ENCODE measurements at regions of chr1 and their contacts with region 1.

Region 1: DNA sequence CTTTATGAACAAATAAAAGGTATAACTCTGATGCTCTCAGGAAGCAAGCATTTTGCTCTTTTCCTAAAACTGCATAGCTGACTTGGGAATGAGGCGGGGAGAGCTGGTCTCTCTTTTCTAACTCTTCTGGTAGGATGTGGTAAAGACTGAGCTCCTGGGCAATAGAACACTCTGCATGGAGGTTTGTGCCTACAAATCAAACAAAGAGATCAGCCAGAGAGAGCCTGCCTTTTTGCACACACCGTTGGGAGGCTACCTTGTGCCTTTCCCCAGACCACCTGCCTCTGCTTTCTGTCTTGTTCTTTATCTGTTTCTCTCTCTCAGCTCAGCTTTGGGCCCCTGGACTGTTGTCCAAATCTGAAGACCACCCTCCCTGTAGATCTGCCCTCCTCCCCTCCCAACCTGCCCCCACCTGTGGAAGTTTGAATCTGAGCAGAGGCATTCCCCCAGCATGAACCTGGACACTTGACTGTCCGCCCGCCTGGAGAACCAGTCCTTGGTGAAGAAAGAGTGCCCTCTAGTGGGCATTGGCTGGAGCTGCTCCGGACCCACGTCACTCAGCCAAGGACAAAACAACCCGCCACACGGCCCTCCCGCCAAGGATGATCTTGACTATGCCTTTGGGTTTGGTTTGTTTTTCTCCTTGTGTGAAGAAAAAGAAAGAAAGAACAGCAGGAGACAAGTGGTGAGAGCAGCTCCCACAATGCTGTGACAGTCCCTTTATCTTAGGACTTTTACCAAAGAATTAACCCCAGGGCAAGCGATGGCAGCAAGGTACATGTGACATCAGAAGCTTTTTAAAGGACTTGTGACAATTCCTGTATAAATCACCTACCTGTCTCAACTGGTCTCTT is 228.2 kb downstream of the PBX1 start:
- DNase-seq: no peak
- H3K4me3 ChIP-seq: no peak overlapping the region
- CTCF ChIP-seq: peak; percentile 95

Region 2: DNA sequence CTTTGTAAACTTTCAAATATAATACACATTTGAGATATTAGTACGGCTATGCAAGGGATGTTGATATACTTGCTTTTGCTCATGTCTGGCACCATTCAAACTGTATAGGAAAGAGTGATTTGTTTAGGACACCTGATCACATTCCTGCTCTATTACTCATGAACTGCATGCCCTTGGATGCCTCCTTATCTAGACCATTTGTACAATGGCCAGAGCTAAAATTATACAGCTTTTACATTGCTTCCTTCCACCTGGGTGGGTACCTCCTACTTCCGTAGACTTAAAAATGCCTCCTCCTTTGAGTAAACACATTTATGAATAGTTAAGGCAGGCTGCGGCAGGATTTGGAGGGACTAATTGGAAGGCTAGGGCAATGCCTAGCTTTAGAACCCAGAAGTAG is 313.7 kb before region 1 on chr1:
- CTCF ChIA-PET with region 1: no interaction called
- POLR2A ChIA-PET with region 1: no interaction called
- DNase-seq: no peak
- H3K4me3 ChIP-seq: no peak overlapping the region
- CTCF ChIP-seq: no peak

Region 3: DNA sequence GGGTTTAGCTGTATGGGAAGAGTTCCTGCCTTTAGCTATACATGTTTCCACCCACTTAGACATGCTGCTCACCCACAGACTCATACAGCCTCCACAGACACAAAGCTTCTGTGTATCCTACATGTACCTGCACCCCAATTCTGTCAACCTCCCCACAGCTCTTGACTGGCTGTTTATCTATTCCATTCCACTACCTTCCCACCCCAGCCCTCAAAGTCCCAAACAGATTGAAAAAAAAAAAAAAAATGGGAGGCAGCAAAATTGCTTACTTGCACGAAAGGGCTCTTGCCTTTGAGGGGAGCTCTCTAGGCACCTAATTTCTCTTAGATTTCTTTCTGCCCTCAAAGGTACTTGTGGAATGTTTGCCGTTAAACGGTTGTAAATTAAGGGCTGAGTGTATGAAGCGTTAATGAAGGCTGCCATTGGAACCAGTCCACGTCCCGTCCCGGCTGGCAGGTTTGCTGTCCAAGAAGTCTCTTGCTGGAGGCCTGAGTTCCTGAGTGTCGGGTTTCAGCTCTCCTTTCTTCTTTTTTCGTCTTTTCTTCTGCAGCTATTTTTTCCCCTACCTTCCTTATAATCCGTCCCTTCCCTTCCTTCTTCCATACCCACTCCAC is 184.6 kb before region 1 on chr1:
- CTCF ChIA-PET with region 1: interaction called, 24 read pairs
- POLR2A ChIA-PET with region 1: no interaction called
- DNase-seq: no peak
- H3K4me3 ChIP-seq: no peak overlapping the region
- CTCF ChIP-seq: no peak

Region 4: DNA sequence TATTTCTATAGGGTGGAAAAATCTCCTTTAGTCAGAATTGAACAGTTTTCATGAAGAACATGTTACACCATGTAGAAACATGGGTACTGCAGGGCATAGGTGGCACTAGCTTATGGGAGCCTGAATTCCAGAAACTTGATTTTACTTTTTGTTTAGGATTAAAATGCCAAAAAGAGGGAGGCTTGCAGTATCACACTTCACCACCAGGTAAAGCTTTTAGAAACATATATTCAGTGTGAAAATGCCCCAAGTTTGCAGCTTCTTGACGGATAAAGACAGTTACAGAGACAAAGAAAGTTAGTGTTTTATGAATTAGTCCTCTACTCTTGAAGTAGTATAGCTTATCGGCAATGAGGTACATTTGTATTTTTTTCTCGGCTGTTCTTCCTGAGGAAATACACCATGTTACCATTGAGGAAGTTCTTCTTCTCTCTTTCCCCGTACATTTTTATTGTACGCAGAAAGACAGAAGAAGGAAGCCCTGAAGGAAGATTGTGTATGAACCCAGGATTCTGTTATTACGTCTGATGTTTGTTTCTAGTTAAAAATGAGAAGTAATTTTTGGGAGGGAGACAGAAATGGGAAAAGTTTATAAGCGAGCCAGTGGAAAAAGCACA is 162.1 kb before region 1 on chr1:
- CTCF ChIA-PET with region 1: interaction called, 50 read pairs
- POLR2A ChIA-PET with region 1: no interaction called
- DNase-seq: no peak
- H3K4me3 ChIP-seq: no peak overlapping the region
- CTCF ChIP-seq: peak; percentile 10

Region 5: GRCh38 chr1:164765557-164765956 is 21.6 kb before region 1 on chr1:
- CTCF ChIA-PET with region 1: interaction called, 14 read pairs
- POLR2A ChIA-PET with region 1: no interaction called
- DNase-seq: peak; percentile 86
- H3K4me3 ChIP-seq: no peak overlapping the region
- CTCF ChIP-seq: no peak

Region 6: GRCh38 chr1:164803366-164803765 is 16.2 kb after region 1 on chr1:
- CTCF ChIA-PET with region 1: interaction called, 29 read pairs
- POLR2A ChIA-PET with region 1: no interaction called
- DNase-seq: peak; percentile 56
- H3K4me3 ChIP-seq: no peak overlapping the region
- CTCF ChIP-seq: no peak

Region 7: DNA sequence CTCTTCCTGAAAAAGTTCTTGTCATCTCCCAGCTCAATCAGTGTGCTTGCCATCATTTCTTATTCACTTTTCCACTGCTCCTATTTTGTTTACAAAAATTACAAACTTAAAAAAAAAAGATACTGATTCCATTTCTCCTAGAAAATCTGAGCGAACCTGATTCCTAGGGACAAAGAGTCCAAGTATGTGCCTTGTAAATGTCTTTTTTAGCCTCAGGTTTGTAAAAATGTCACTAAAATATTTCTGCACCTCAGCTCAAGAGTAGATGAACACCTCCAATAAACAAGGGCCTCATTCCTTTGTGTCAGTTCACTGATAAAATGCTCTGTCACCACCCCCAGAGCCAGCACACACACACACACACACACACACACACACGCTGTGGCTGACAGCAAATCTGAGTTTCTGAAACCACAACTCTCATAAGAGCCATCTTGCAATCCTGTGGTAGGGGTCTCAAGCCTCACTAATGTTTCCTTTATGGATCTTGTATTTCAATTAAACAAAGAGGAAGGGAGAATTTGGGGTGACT is 71.0 kb after region 1 on chr1:
- CTCF ChIA-PET with region 1: no interaction called
- POLR2A ChIA-PET with region 1: no interaction called
- DNase-seq: no peak
- H3K4me3 ChIP-seq: no peak overlapping the region
- CTCF ChIP-seq: no peak